IMR-90 (cell line): ENCODE measurements at regions of chr20 and their contacts with region 1.

Region 1: DNA sequence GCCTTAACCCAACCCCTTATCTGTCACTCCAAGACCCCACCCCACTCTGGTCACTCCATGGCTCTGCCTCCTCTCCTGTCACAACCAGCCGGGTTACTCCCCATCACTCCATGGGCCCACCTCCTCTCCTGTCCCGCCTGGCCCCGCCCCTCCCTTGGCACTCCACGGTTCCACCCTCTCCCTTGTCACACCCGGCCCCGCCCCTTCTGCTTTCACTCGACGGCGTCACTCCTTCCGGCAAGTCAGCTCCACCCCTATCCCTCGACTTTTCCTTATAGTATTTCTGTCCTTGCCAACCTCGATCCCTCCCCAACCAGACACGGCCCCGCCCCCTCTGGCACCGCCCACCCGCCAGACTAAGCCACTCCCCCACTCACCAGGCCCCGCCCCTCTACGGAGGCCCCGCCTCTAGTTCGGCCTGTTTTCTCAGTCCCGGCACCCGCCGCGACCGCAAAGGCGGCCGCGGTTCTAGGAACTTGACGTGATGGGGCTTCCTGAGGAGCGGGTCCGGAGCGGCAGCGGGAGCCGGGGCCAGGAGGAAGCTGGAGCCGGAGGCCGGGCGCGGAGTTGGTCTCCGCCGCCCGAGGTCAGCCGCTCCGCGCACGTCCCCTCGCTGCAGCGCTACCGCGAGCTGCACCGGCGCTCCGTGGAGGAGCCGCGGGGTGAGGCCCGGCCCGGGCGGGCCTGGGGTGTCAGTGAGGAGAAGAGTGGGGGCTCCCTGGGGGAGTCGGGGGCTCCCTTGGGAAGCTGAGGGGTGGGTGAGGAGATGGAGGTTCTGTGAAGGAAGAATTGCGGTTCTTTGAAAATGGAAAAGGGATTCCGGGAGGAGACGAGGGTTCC is at the start of gene ACSS2:
- DNase-seq: peak; percentile 97
- ATAC-seq: peak; percentile 88
- H3K4me3 ChIP-seq: peak within 1 kb of the TSS; percentile 67
- H3K27ac ChIP-seq: peak within 1 kb of the TSS; percentile 30
- H3K4me1 ChIP-seq: peaks cover 14% of the 10 kb centered on the region
- H3K27me3 ChIP-seq: no peaks in the 10 kb centered on the region
- CTCF ChIP-seq: no peak
- POLR2A ChIP-seq: peak; percentile 65; the same call in 1 of the 2 replicates
- RAD21 ChIP-seq: no peak
- total RNA-seq, gene ACSS2: 38.9 and 46.4 TPM in 2 replicates

Region 2: GRCh38 chr20:34744847-34745246 is 131.5 kb before region 1 on chr20:
- CTCF ChIA-PET with region 1: no interaction called
- POLR2A ChIA-PET with region 1: no interaction called
- dilution Hi-C with region 1: no loop called
- in situ Hi-C with region 1: no loop called
- intact Hi-C with region 1: no loop called
- DNase-seq: no peak
- ATAC-seq: no peak
- H3K4me3 ChIP-seq: no peak overlapping the region
- H3K27ac ChIP-seq: no peak overlapping the region
- H3K4me1 ChIP-seq: peaks cover 2% of the 10 kb centered on the region; the same call in 1 of the 2 replicates
- H3K27me3 ChIP-seq: no peaks in the 10 kb centered on the region
- CTCF ChIP-seq: no peak
- POLR2A ChIP-seq: no peak
- RAD21 ChIP-seq: no peak

Region 3: DNA sequence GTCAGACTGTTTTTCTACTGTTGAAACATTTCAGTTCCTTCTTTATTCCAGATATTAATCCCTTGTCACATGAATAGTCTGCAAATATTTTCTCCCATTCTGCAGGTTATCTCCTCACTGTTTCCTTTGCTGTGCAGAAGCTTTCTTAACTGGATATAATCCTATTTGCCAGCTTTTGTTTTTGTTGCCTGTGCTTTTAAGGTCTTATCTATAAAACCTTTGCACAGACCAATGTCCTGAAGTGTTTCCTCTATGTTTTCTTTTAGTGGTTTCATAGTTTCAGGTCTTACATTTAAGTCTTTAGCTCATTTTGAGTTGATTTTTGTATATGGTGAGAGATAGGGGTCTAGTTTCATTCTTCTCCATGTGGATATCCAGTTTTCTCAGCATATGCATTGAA is 70.1 kb before region 1 on chr20:
- CTCF ChIA-PET with region 1: no interaction called
- POLR2A ChIA-PET with region 1: no interaction called
- dilution Hi-C with region 1: no loop called
- in situ Hi-C with region 1: no loop called
- intact Hi-C with region 1: no loop called
- DNase-seq: no peak
- ATAC-seq: no peak
- H3K4me3 ChIP-seq: no peak overlapping the region
- H3K27ac ChIP-seq: no peak overlapping the region
- H3K4me1 ChIP-seq: no peaks in the 10 kb centered on the region
- H3K27me3 ChIP-seq: no peaks in the 10 kb centered on the region
- CTCF ChIP-seq: no peak
- POLR2A ChIP-seq: no peak
- RAD21 ChIP-seq: no peak

Region 4: DNA sequence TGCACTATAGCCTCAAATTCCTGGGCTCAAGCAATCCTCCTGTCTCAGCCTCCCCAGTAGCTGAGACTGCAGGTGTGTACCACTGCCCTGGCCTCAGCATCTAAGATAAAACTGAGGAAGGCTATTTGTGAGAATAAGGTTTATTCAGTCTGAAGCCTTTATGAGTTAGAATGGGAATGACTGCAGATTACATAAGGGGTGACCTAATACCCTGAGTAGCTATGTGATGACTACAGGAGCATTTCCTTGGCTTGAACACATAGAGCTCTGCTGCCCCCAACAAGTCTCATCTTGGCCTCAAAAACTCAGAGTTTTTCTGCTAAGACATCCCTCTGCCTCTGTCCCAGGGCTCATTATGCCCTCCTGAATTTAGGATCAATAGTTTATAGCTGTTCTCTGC is 71.6 kb after region 1 on chr20:
- CTCF ChIA-PET with region 1: interaction called, 19 read pairs
- POLR2A ChIA-PET with region 1: no interaction called
- dilution Hi-C with region 1: no loop called
- in situ Hi-C with region 1: no loop called
- intact Hi-C with region 1: loop called (anchors 1 kb)
- DNase-seq: peak; percentile 92
- ATAC-seq: peak; percentile 88
- H3K4me3 ChIP-seq: no peak overlapping the region
- H3K27ac ChIP-seq: no peak overlapping the region
- H3K4me1 ChIP-seq: peaks cover 4% of the 10 kb centered on the region
- H3K27me3 ChIP-seq: no peaks in the 10 kb centered on the region
- CTCF ChIP-seq: peak; percentile 48
- POLR2A ChIP-seq: no peak
- RAD21 ChIP-seq: peak; percentile 58

Region 5: DNA sequence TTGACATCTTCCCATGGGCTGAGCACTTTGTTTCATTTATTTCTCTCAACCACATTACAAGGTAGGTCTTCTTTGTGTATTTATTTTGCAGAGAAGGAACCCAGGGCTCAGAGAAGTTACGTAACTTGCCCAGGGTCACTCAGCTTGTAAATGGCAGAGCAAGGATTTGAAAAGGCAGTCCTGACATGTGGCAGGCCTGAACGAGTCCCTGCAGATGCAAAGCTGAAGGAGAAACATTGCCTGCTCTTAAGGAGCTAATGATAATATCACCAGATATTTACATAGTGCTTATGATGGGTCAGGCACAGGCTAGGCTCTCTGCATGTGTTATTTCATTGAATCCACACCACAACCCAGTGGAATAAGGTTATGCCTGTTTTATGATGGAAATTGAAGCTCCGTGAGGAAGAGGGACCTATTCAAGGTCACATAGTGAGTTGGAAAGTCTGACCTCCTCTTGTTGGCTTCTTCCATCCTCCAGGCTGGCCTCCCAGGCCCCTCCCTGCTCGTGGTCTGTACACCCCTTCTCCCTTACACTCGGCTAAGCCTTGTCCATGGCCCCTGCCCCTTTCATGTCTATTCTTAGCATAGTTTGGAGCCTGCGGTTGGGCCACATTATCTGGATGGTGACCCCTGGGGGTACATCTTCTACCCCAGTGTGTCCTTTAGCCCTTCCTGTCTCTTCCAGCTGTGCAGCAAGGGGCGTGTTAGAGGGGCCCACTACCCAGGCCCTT is 91.8 kb after region 1 on chr20:
- CTCF ChIA-PET with region 1: no interaction called
- POLR2A ChIA-PET with region 1: no interaction called
- dilution Hi-C with region 1: no loop called
- in situ Hi-C with region 1: no loop called
- intact Hi-C with region 1: no loop called
- DNase-seq: no peak
- ATAC-seq: no peak; the same call in 1 of the 2 replicates
- H3K4me3 ChIP-seq: no peak overlapping the region
- H3K27ac ChIP-seq: no peak overlapping the region
- H3K4me1 ChIP-seq: no peaks in the 10 kb centered on the region
- H3K27me3 ChIP-seq: peaks cover 14% of the 10 kb centered on the region
- CTCF ChIP-seq: no peak
- POLR2A ChIP-seq: no peak
- RAD21 ChIP-seq: no peak

Region 6: DNA sequence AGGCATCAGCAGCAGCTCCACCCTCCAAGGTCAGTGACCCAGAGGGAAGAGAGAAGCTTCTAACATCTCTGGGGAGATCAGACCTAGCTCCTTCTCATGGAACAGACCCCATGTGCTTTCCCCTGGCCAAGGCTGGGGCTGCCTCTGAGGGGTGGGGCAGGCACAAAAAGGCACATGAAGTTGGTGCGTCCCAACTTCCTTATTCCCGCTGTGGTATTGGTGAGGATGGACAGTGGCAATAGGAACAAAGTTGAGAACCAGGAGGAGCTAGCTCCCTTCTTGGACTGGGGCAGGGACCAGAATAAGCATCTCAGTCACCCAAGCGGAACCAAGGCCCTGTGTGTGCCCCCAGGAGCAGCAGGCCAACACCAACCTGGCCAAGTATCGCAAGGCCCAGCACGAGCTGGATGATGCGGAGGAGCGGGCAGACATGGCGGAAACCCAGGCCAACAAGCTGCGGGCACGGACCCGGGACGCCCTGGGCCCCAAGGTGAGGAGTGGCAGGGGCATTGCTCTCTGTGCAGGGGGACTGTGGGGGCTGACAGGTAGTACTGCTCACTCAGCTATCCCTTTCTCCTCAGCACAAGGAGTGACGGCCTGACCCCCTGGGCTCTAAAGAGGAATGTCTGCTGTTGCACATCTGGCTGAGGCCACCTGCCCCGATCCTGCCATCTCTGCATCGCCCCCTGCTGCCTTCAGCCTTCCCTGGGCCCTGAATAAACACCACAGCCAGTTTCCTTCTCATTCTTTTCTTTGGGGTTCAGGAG is 125.4 kb after region 1 on chr20:
- CTCF ChIA-PET with region 1: interaction called, 4 read pairs
- POLR2A ChIA-PET with region 1: no interaction called
- dilution Hi-C with region 1: no loop called
- in situ Hi-C with region 1: no loop called
- intact Hi-C with region 1: loop called (anchors 5 kb)
- DNase-seq: no peak
- ATAC-seq: peak; percentile 24; the same call in 1 of the 2 replicates
- H3K4me3 ChIP-seq: no peak overlapping the region
- H3K27ac ChIP-seq: no peak overlapping the region
- H3K4me1 ChIP-seq: no peaks in the 10 kb centered on the region
- H3K27me3 ChIP-seq: no peaks in the 10 kb centered on the region
- CTCF ChIP-seq: peak; percentile 38
- POLR2A ChIP-seq: no peak
- RAD21 ChIP-seq: peak; percentile 23; the same call in 1 of the 2 replicates

Region 7: DNA sequence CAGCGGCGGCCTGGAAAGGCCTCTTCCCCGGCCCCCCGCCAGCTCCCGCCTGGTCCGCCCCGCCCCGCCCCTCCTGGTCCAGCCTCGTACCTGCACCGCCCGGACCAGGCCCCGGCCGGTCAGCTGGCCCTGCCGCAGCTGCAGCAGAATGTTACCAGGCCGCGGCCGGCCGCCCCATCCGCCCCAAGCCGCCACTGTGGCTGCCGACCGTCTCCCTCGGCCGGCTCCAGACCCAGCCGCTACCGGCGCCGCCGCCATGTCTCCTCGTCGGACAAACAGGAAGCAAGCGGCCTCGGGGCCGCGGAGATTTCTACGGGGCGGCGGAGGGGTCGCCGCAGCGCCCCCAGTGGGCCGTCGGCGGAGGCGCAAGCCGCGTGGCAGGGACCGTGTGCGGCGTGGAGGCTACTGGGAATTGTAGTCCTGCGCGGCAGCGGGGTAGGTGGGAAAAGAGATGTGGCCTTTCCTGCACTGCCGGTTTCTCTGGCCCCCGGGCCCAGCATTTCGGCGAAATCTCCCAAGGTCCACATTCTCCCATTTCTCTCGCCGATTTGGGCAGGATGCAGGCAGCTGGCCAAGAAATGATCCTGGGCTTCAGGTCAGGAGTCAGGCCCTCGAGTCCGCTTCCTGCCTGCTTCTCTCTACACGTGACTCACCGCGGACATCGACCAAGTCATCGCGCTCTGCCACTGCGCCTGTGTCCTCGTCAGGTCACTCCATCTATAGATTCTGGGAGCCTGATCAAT is 216.3 kb after region 1 on chr20 and contains the start of gene TRPC4AP:
- CTCF ChIA-PET with region 1: no interaction called
- POLR2A ChIA-PET with region 1: no interaction called
- dilution Hi-C with region 1: no loop called
- in situ Hi-C with region 1: no loop called
- intact Hi-C with region 1: loop called (anchors 1 kb)
- DNase-seq: peak; percentile 86
- ATAC-seq: peak; percentile 95
- H3K4me3 ChIP-seq: peak within 1 kb of the TSS; percentile 87
- H3K27ac ChIP-seq: peak within 1 kb of the TSS; percentile 96
- H3K4me1 ChIP-seq: peaks cover 9% of the 10 kb centered on the region
- H3K27me3 ChIP-seq: no peaks in the 10 kb centered on the region
- CTCF ChIP-seq: peak; percentile 98
- POLR2A ChIP-seq: peak; percentile 90
- RAD21 ChIP-seq: peak; percentile 52
- total RNA-seq, gene TRPC4AP: 39.4 and 41.0 TPM in 2 replicates

Region 8: GRCh38 chr20:35269055-35269781 is 392.8 kb after region 1 on chr20:
- CTCF ChIA-PET with region 1: no interaction called
- POLR2A ChIA-PET with region 1: no interaction called
- dilution Hi-C with region 1: no loop called
- in situ Hi-C with region 1: loop called (anchors 25 kb)
- intact Hi-C with region 1: loop called (anchors 10 kb)
- DNase-seq: peak; percentile 62
- ATAC-seq: peak; percentile 84
- H3K4me3 ChIP-seq: no peak overlapping the region
- H3K27ac ChIP-seq: no peak overlapping the region
- H3K4me1 ChIP-seq: no peaks in the 10 kb centered on the region
- H3K27me3 ChIP-seq: no peaks in the 10 kb centered on the region
- CTCF ChIP-seq: peak; percentile 79
- POLR2A ChIP-seq: no peak
- RAD21 ChIP-seq: peak; percentile 89